AG04450 (cell line): ENCODE measurements at regions of chr1 and their contacts with region 1.

Region 1: GRCh38 chr1:58546520-58547308 is at the start of gene OMA1:
- DNase-seq: peak; percentile 96
- H3K4me3 ChIP-seq: peak within 1 kb of the TSS; percentile 75
- H3K27ac ChIP-seq: peak within 1 kb of the TSS; percentile 97
- H3K27me3 ChIP-seq: peaks cover 18% of the 10 kb centered on the region
- CTCF ChIP-seq: peak; percentile 99
- polyA plus RNA-seq, gene OMA1: 12.1 and 17.3 TPM in 2 replicates

Region 2: DNA sequence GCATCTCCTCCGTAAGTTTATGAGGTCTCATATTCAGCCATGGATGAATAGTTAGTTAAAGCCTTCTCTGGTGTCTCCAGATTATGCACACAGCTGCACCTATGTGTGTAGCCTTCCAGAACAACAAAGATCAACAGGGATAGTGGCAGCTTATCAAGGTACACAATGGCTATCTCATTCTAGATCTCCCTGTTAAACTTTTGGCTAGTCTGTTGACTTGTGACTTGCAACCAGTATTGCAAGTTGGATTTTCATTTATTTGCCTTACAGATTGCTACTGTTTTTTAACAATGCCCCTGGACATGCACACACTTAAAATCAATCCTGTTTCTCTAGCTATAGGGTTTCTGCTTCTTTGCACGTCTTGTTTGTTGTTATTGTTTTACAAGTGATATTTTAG is 363.4 kb before region 1 on chr1:
- CTCF ChIA-PET with region 1: no interaction called
- POLR2A ChIA-PET with region 1: no interaction called
- DNase-seq: no peak
- H3K4me3 ChIP-seq: no peak overlapping the region
- H3K27ac ChIP-seq: no peak overlapping the region
- H3K27me3 ChIP-seq: no peaks in the 10 kb centered on the region
- CTCF ChIP-seq: no peak

Region 3: GRCh38 chr1:58363585-58363984 is 183.1 kb before region 1 on chr1:
- CTCF ChIA-PET with region 1: interaction called, 3 read pairs
- POLR2A ChIA-PET with region 1: interaction called, 11 read pairs
- DNase-seq: no peak
- H3K4me3 ChIP-seq: no peak overlapping the region
- H3K27ac ChIP-seq: no peak overlapping the region
- H3K27me3 ChIP-seq: peaks cover 2% of the 10 kb centered on the region
- CTCF ChIP-seq: peak; percentile 19; the same call in 1 of the 2 replicates

Region 4: DNA sequence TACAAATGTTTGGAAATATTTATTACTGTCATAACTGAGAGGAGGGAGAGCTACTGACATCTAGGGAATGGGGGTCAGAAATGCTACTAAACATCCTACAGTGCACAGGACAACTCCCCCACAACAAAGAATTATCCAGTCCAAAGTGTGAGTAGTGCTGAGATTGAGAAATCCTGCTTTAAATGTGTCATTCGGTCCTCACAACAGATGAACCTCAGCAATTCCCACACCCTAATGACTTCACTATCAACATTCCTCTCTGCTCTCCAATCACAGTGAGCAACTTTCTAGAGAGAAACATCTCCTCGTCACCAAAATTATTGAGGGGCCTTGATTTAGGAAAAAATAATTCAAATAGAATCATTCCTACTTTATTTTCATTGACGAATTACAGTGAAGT is 18.2 kb before region 1 on chr1:
- CTCF ChIA-PET with region 1: interaction called, 39 read pairs
- POLR2A ChIA-PET with region 1: interaction called, 10 read pairs
- DNase-seq: no peak
- H3K4me3 ChIP-seq: no peak overlapping the region
- H3K27ac ChIP-seq: no peak overlapping the region
- H3K27me3 ChIP-seq: no peaks in the 10 kb centered on the region
- CTCF ChIP-seq: no peak

Region 5: DNA sequence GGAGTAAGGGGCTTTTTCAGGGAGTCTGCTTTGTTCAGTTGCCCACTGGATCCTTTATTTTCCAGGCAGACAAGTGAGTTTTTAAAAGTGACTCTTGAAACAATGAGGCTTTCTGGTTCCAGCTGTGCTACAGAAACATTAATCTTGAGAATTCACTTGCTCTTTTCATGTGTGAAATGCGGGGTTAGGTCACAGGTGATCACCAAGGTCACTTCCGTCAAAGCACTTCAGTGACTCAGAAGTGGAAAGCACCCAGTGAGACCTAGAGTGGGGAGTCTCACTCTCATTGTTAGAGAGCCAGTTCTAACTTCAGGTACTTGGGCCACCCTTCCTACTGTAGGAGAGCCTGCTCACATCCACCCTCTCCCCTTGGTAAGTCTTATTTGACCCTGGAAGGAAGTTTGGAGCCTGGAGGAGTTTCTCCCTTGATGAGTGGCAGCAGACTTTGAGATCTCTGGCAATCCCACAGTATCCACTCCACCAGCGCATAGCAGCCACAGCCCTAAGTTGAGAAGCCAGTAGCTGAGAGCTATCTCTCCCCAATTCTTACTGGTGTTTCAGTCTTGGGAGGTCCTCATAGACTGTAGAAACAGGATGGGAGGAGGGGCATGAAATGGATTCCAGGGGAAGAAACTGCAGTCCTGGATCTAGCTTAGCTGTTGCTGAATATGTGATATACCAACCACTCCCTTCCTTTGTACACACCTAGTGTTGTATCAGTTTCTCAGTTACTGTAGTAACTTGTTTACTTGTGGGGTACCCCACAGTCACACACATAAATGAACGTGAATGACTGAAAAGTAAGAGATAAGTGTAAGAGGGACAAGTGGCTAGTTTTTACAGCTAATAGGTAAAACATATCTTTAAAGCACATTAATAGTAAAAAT is 27.2 kb after region 1 on chr1:
- CTCF ChIA-PET with region 1: interaction called, 13 read pairs
- POLR2A ChIA-PET with region 1: no interaction called
- DNase-seq: no peak
- H3K4me3 ChIP-seq: no peak overlapping the region
- H3K27ac ChIP-seq: no peak overlapping the region
- H3K27me3 ChIP-seq: peaks cover 64% of the 10 kb centered on the region
- CTCF ChIP-seq: no peak

Region 6: GRCh38 chr1:58584082-58584895 is 37.6 kb after region 1 on chr1:
- CTCF ChIA-PET with region 1: interaction called, 14 read pairs
- POLR2A ChIA-PET with region 1: interaction called, 4 read pairs
- DNase-seq: peak; percentile 87
- H3K4me3 ChIP-seq: no peak overlapping the region
- H3K27ac ChIP-seq: peak overlapping the region; percentile 80
- H3K27me3 ChIP-seq: no peaks in the 10 kb centered on the region
- CTCF ChIP-seq: no peak